SK-N-SH (cell line): ENCODE measurements at regions of chr6 and their contacts with region 1.

Region 1: GRCh38 chr6:36302227-36302976 is 32.5 kb downstream of the PNPLA1 start:
- DNase-seq: peak; percentile 82
- H3K4me3 ChIP-seq: peak overlapping the region in 1 of 2 experiments; percentile 21; a peak in 1 of 4 replicates
- H3K27ac ChIP-seq: no peak overlapping the region
- H3K4me1 ChIP-seq: no peaks in the 10 kb centered on the region; a peak in 1 of 4 replicates
- H3K27me3 ChIP-seq: no peaks in the 10 kb centered on the region
- CTCF ChIP-seq: peak; percentile 96
- EP300 ChIP-seq: no peak
- RAD21 ChIP-seq: peak; percentile 77

Region 2: GRCh38 chr6:36269824-36270705 is 32.3 kb before region 1 on chr6 and contains the start of gene PNPLA1:
- CTCF ChIA-PET with region 1: interaction called, 10 read pairs
- POLR2A ChIA-PET with region 1: no interaction called
- DNase-seq: no peak
- H3K4me3 ChIP-seq: no peak within 1 kb of the TSS
- H3K27ac ChIP-seq: no peak within 1 kb of the TSS
- H3K4me1 ChIP-seq: peaks cover 0 to 7% of the 10 kb centered on the region in 2 experiments; a peak in 1 of 4 replicates
- H3K27me3 ChIP-seq: no peaks in the 10 kb centered on the region
- CTCF ChIP-seq: no peak
- EP300 ChIP-seq: no peak
- RAD21 ChIP-seq: no peak
- polyA plus RNA-seq, gene PNPLA1: not detected in 2 replicates

Region 3: DNA sequence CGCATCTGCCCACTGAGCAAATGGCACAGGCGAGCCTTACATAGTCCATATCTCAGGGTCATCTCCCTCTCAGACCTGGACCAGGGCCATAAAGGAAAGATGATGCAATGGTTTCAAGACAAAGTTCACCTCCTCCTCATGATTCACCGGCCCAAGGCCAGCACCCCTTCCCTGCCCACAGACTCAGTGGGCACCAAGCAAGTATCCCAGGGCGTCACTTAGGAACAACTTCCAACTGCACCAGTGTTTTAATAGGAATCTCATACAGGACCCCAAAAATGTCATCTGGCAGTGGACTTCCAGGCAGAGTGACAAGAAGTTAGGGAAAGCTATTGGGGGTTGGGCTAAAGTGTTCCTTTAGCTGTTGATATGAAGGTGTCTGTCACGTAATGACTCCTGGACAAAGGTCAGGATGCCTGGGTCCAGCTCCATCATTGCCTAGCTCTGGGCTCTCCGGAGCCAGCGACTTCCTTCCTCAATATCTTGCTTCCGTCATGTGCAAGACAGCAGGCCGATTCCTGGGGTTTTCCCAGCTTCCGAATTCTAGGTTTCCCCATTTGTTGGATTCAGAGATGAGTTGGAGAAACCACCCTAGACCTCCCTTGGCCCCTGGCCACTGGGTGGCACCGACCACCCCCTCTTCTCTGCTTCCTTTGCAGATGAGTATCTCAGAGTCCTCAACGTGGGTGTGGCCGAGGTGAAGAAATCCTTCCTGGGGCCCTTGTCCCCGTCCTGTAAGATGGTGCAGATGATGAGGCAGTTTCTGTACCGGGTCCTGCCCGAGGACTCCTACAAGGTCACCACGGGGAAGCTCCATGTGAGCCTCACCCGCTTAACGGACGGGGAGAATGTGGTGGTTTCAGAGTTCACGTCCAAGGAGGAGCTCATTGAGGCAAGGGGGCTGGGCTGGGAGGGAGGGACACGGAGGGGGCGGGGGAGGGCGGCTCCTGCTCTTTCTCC is 11.5 kb before region 1 on chr6:
- CTCF ChIA-PET with region 1: interaction called, 161 read pairs
- POLR2A ChIA-PET with region 1: no interaction called
- DNase-seq: no peak
- H3K4me3 ChIP-seq: no peak overlapping the region
- H3K27ac ChIP-seq: no peak overlapping the region
- H3K4me1 ChIP-seq: no peaks in the 10 kb centered on the region
- H3K27me3 ChIP-seq: no peaks in the 10 kb centered on the region; the same call in 1 of the 2 replicates
- CTCF ChIP-seq: no peak
- EP300 ChIP-seq: no peak
- RAD21 ChIP-seq: no peak

Region 4: GRCh38 chr6:36326356-36326995 is 24.1 kb after region 1 on chr6:
- CTCF ChIA-PET with region 1: interaction called, 123 read pairs
- POLR2A ChIA-PET with region 1: no interaction called
- DNase-seq: peak; percentile 58
- H3K4me3 ChIP-seq: no peak overlapping the region
- H3K27ac ChIP-seq: no peak overlapping the region
- H3K4me1 ChIP-seq: peaks cover 0 to 17% of the 10 kb centered on the region in 2 experiments; a peak in 1 of 4 replicates
- H3K27me3 ChIP-seq: no peaks in the 10 kb centered on the region; the same call in 1 of the 2 replicates
- CTCF ChIP-seq: no peak
- EP300 ChIP-seq: no peak
- RAD21 ChIP-seq: no peak

Region 5: DNA sequence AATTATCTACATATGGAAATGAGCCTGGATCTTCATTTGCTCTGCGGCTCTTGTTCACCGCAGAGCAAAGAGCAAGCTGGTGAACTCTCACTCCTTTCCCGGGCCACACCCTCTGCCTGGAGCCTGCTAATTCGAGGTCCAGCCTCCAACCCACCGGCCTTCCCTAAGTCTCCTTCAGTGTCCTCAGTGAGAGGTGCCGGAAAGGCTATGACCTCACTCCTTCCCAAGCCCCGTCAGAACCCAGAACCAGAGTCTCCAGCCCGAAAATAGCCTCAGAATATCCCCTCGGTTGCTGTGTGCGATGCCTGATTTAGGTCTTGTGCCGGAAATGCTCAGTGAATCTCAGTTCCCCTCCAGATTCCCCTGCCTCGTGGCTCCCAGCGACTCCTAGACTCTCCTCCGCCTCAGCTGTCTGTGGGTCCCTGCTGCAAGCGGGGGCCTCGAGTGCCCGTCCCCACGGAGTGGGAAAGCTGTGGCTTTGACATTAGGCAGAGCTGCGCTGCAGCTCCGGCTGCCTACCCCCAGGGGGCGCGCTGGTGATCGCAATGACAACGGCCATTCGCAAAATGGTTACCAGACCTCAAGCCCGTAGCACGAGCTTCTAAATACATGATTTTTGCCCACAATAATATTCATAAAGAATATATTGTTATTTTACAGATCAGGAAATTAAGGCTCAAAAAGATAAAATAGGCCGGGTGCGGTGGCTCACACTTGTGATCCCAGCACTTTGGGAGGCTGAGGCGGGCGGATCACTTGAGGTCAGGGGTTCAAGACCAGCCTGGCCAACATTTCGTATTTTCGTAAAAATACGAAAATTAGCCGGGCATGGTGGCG is 38.4 kb after region 1 on chr6:
- CTCF ChIA-PET with region 1: interaction called, 69 read pairs
- POLR2A ChIA-PET with region 1: no interaction called
- DNase-seq: peak; percentile 82
- H3K4me3 ChIP-seq: peak overlapping the region in 1 of 2 experiments; percentile 48; a peak in 1 of 4 replicates
- H3K27ac ChIP-seq: no peak overlapping the region
- H3K4me1 ChIP-seq: no peaks in the 10 kb centered on the region; a peak in 1 of 4 replicates
- H3K27me3 ChIP-seq: peaks cover 14% of the 10 kb centered on the region; the same call in 1 of the 2 replicates
- CTCF ChIP-seq: peak; percentile 98
- EP300 ChIP-seq: no peak
- RAD21 ChIP-seq: peak; percentile 68

Region 6: GRCh38 chr6:36360241-36361054 is 58.0 kb after region 1 on chr6:
- CTCF ChIA-PET with region 1: interaction called, 149 read pairs
- POLR2A ChIA-PET with region 1: no interaction called
- DNase-seq: peak; percentile 87
- H3K4me3 ChIP-seq: peak overlapping the region in 1 of 2 experiments; percentile 40; a peak in 1 of 4 replicates
- H3K27ac ChIP-seq: no peak overlapping the region
- H3K4me1 ChIP-seq: peaks cover 2 to 6% of the 10 kb centered on the region in 2 experiments; a peak in 2 of 4 replicates
- H3K27me3 ChIP-seq: no peaks in the 10 kb centered on the region
- CTCF ChIP-seq: peak; percentile 79
- EP300 ChIP-seq: no peak
- RAD21 ChIP-seq: peak; percentile 94